Aorta (tissue), 5 donors: ENCODE measurements at regions of chr15 and their contacts with region 1.

Region 1: GRCh38 chr15:77543159-77543882 is 89.4 kb downstream of the LINGO1 start:
- DNase-seq: peak; percentile 91 to 95
- ATAC-seq: peak; percentile 93
- H3K4me3 ChIP-seq: no peak overlapping the region
- H3K27ac ChIP-seq: no peak overlapping the region
- H3K4me1 ChIP-seq: no peaks in the 10 kb centered on the region
- H3K27me3 ChIP-seq: no peaks in the 10 kb centered on the region

Region 2: GRCh38 chr15:76954744-76955143 is 588.6 kb before region 1 on chr15:
- intact Hi-C with region 1: loop called in 1 of 2 experiments (anchors 5 kb)
- DNase-seq: no peak
- ATAC-seq: no peak
- H3K4me3 ChIP-seq: no peak overlapping the region
- H3K27ac ChIP-seq: no peak overlapping the region
- H3K4me1 ChIP-seq: no peaks in the 10 kb centered on the region
- H3K27me3 ChIP-seq: no peaks in the 10 kb centered on the region

Region 3: GRCh38 chr15:77024271-77025082 is 518.8 kb before region 1 on chr15:
- intact Hi-C with region 1: loop called (anchors 5 kb)
- DNase-seq: peak; percentile 72 to 91
- ATAC-seq: peak; percentile 65
- H3K4me3 ChIP-seq: no peak overlapping the region
- H3K27ac ChIP-seq: no peak overlapping the region
- H3K4me1 ChIP-seq: no peaks in the 10 kb centered on the region
- H3K27me3 ChIP-seq: no peaks in the 10 kb centered on the region

Region 4: GRCh38 chr15:77118882-77119321 is 424.4 kb before region 1 on chr15:
- intact Hi-C with region 1: loop called (anchors 2 to 5 kb)
- DNase-seq: no peak
- ATAC-seq: peak; percentile 39
- H3K4me3 ChIP-seq: no peak overlapping the region
- H3K27ac ChIP-seq: no peak overlapping the region
- H3K4me1 ChIP-seq: no peaks in the 10 kb centered on the region
- H3K27me3 ChIP-seq: no peaks in the 10 kb centered on the region

Region 5: GRCh38 chr15:77496710-77497103 is 46.6 kb before region 1 on chr15:
- intact Hi-C with region 1: loop called in 1 of 2 experiments (anchors 5 kb)
- DNase-seq: peak; percentile 93 to 95
- ATAC-seq: peak; percentile 96
- H3K4me3 ChIP-seq: no peak overlapping the region
- H3K27ac ChIP-seq: peak overlapping the region in 1 of 2 donors; percentile 81
- H3K4me1 ChIP-seq: no peaks in the 10 kb centered on the region
- H3K27me3 ChIP-seq: no peaks in the 10 kb centered on the region